Activated CD8-positive, alpha-beta T cell treated with anti-CD3 and anti-CD28 coated beads for 36 hours (primary cell): ENCODE measurements at regions of chr1 and their contacts with region 1.

Region 1: GRCh38 chr1:185170291-185170848 is 13.4 kb downstream of the SWT1 start:
- DNase-seq: peak; percentile 59
- ATAC-seq: peak; percentile 95
- H3K4me3 Mint-ChIP-seq: no peak overlapping the region
- H3K27ac Mint-ChIP-seq: peak overlapping the region; percentile 64
- H3K4me1 Mint-ChIP-seq: peaks cover 4% of the 10 kb centered on the region
- H3K27me3 Mint-ChIP-seq: no peaks in the 10 kb centered on the region
- CTCF ChIP-seq: peak; percentile 80

Region 2: GRCh38 chr1:184805667-184806295 is 364.6 kb before region 1 on chr1:
- CTCF ChIA-PET with region 1: interaction called, 35 read pairs
- POLR2A ChIA-PET with region 1: no interaction called
- intact Hi-C with region 1: loop called (anchors 2 kb)
- DNase-seq: peak; percentile 91
- ATAC-seq: peak; percentile 97
- H3K4me3 Mint-ChIP-seq: no peak overlapping the region
- H3K27ac Mint-ChIP-seq: no peak overlapping the region
- H3K4me1 Mint-ChIP-seq: peaks cover 6% of the 10 kb centered on the region
- H3K27me3 Mint-ChIP-seq: no peaks in the 10 kb centered on the region
- CTCF ChIP-seq: peak; percentile 93

Region 3: DNA sequence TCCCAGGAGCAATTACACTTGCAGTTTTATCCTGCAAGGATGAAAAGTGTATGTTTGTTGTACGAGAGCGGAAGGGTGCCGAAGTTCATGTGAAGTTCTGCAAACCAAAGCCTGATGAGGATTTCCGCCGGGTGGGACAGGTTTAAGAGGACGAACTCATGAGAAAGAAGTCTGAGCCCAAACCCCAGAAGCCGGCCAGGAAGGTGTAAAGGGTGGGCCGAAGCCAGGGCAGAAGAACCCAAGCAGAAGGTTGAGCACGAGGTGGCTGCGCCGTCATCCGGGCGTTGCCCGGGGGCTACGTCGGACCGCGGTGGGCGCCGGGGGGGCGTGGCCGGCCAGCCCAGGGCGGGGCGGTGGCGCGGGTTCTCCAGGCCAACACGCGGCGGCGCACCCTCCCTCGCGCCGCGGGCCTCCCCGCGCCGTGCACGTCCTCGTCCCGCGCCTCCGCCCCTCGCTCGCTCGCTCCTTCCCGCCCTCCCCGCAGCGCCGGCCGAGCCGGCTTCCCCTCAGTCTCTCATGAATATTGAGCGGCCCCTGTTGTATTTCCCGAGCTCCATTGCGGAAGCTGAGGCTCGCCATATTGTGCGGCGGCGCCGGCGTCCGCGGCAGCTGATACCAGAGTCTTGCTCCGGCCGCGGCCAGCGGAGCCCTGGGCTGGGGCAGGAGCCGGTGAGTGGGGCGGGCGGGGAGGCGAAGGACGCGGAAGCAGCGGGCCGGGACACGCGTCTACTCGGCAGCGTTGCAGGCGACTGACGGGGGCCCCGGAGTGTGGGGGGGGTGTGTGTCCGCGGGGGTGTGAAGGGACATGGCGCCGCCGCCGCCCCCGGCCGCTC is 125.2 kb before region 1 on chr1 and contains the start of gene RNF2:
- CTCF ChIA-PET with region 1: interaction called, 20 read pairs
- POLR2A ChIA-PET with region 1: no interaction called
- intact Hi-C with region 1: no loop called
- DNase-seq: peak; percentile 83
- ATAC-seq: peak; percentile 92
- H3K4me3 Mint-ChIP-seq: peak within 1 kb of the TSS; percentile 97
- H3K27ac Mint-ChIP-seq: peak within 1 kb of the TSS; percentile 92
- H3K4me1 Mint-ChIP-seq: peaks cover 32% of the 10 kb centered on the region
- H3K27me3 Mint-ChIP-seq: no peaks in the 10 kb centered on the region
- CTCF ChIP-seq: no peak
- total RNA-seq, gene RNF2: 21.4 to 24.3 TPM

Region 4: DNA sequence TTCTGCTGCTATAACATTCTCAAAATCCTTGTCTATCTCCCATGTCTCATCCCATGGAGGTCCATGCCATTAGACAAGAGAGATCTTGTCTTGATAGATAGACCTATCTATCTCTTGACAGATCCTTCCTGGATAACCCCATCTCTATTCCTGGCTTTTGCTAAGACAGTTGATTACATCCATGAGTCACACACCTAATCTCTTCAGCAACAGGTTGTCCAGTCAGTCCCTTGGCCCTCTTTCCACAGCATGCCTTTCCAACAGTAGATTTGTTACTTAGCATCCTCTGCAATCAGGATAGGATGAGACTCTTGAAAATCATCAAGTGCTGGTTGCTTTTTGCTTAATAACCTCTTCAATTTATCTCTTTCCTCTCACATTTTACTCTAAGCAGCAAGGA is 60.2 kb before region 1 on chr1:
- CTCF ChIA-PET with region 1: no interaction called
- POLR2A ChIA-PET with region 1: no interaction called
- intact Hi-C with region 1: no loop called
- DNase-seq: no peak
- ATAC-seq: no peak
- H3K4me3 Mint-ChIP-seq: no peak overlapping the region
- H3K27ac Mint-ChIP-seq: no peak overlapping the region
- H3K4me1 Mint-ChIP-seq: no peaks in the 10 kb centered on the region
- H3K27me3 Mint-ChIP-seq: no peaks in the 10 kb centered on the region
- CTCF ChIP-seq: no peak

Region 5: DNA sequence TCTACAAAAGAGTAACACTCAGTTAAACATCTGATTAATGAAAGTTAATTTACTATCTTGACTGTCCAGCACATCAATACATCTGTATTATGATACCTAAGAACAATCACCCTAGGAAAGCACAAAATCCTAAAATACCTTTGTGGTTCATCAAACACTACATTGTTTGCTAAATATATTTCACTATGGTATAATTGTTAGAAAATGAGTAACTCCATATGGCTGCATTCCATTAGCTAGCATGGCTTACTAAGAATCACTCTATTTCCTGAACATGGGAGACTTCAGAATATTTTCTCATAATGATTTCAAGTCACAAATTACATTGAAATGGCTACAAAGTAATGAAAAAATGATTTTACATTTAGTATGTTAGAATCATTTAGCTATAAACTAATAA is 26.1 kb before region 1 on chr1:
- CTCF ChIA-PET with region 1: interaction called, 16 read pairs
- POLR2A ChIA-PET with region 1: no interaction called
- intact Hi-C with region 1: no loop called
- DNase-seq: no peak
- ATAC-seq: no peak
- H3K4me3 Mint-ChIP-seq: no peak overlapping the region
- H3K27ac Mint-ChIP-seq: no peak overlapping the region
- H3K4me1 Mint-ChIP-seq: no peaks in the 10 kb centered on the region
- H3K27me3 Mint-ChIP-seq: no peaks in the 10 kb centered on the region
- CTCF ChIP-seq: no peak

Region 6: GRCh38 chr1:185238447-185238846 is 68.1 kb after region 1 on chr1:
- CTCF ChIA-PET with region 1: interaction called, 15 read pairs
- POLR2A ChIA-PET with region 1: no interaction called
- intact Hi-C with region 1: no loop called
- DNase-seq: no peak
- ATAC-seq: peak; percentile 64
- H3K4me3 Mint-ChIP-seq: no peak overlapping the region
- H3K27ac Mint-ChIP-seq: no peak overlapping the region
- H3K4me1 Mint-ChIP-seq: peaks cover 26% of the 10 kb centered on the region
- H3K27me3 Mint-ChIP-seq: no peaks in the 10 kb centered on the region
- CTCF ChIP-seq: peak; percentile 48

Region 7: GRCh38 chr1:185681034-185681633 is 510.8 kb after region 1 on chr1:
- CTCF ChIA-PET with region 1: interaction called, 20 read pairs
- POLR2A ChIA-PET with region 1: no interaction called
- intact Hi-C with region 1: no loop called
- DNase-seq: peak; percentile 22
- ATAC-seq: peak; percentile 71
- H3K4me3 Mint-ChIP-seq: no peak overlapping the region
- H3K27ac Mint-ChIP-seq: no peak overlapping the region
- H3K4me1 Mint-ChIP-seq: peaks cover 21% of the 10 kb centered on the region
- H3K27me3 Mint-ChIP-seq: no peaks in the 10 kb centered on the region
- CTCF ChIP-seq: peak; percentile 68